Activated CD8-positive, alpha-beta memory T cell treated with anti-CD3 and anti-CD28 coated beads, Interleukin-2, amount 10 ng/mL, durations not matched to agents 7 days and 5 days (primary cell): ENCODE measurements at regions of chr19 and their contacts with region 1.

Region 1: GRCh38 chr19:51514866-51515481 is 13.4 kb upstream of the SIGLEC12 start:
- DNase-seq: peak; percentile 52
- ATAC-seq: peak; percentile 58
- H3K4me3 Mint-ChIP-seq: no peak overlapping the region
- H3K27ac Mint-ChIP-seq: no peak overlapping the region
- H3K4me1 Mint-ChIP-seq: peaks cover 9% of the 10 kb centered on the region
- H3K27me3 Mint-ChIP-seq: peaks cover 45% of the 10 kb centered on the region

Region 2: GRCh38 chr19:51422053-51422448 is 92.9 kb before region 1 on chr19:
- CTCF ChIA-PET with region 1: interaction called, 16 read pairs
- DNase-seq: peak; percentile 90
- ATAC-seq: peak; percentile 83
- H3K4me3 Mint-ChIP-seq: no peak overlapping the region
- H3K27ac Mint-ChIP-seq: no peak overlapping the region
- H3K4me1 Mint-ChIP-seq: peaks cover 17% of the 10 kb centered on the region
- H3K27me3 Mint-ChIP-seq: peaks cover 18% of the 10 kb centered on the region

Region 3: DNA sequence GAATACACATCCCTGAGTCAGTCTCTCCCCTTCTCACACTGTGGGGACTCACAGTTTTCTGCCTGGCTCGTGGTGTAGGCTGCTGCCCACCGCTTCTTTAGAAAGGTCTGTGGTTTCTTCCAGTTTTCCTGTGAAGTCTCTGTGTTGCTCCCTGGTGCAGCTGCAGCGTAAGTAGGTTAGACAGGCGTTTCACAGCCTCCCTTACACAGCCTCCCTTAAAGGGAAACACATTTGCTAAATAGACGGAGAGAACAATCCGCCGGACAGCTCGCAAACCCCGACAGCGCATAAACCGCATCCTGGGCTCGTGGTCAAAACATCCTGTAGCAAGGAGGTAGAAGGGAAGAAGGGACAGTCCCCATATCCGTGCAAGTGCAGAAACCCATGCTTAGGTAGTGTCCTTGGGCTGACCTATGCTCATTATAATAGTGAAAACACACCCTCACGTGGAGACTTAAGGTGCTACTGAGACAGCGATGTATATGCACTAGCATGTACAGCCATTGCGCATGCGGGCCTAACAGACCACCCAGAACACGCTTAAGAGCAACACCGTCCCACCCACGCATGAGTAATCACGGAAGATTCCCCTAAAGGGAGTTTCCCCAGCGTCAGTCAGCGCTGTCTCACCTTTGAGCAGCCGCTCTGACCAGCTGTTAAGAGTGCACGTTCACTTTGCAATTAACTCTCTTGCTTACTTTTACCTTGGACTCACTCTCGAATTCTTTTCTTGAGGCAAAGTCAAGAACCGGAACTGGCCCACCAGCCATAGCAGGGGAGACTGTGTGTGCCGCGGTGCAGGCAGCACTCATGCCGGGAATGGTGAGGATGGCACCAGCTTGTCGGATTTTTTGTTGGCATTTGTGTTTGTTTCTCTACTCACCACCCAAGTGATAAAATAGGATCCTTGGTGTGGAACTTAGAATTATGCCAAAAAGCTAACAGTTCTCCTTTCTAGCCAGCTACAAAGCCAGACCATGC is 73.3 kb before region 1 on chr19:
- CTCF ChIA-PET with region 1: interaction called, 11 read pairs
- DNase-seq: peak; percentile 99
- ATAC-seq: peak; percentile 91
- H3K4me3 Mint-ChIP-seq: peak overlapping the region; percentile 68
- H3K27ac Mint-ChIP-seq: peak overlapping the region; percentile 82
- H3K4me1 Mint-ChIP-seq: peaks cover 39% of the 10 kb centered on the region
- H3K27me3 Mint-ChIP-seq: peaks cover 31% of the 10 kb centered on the region

Region 4: DNA sequence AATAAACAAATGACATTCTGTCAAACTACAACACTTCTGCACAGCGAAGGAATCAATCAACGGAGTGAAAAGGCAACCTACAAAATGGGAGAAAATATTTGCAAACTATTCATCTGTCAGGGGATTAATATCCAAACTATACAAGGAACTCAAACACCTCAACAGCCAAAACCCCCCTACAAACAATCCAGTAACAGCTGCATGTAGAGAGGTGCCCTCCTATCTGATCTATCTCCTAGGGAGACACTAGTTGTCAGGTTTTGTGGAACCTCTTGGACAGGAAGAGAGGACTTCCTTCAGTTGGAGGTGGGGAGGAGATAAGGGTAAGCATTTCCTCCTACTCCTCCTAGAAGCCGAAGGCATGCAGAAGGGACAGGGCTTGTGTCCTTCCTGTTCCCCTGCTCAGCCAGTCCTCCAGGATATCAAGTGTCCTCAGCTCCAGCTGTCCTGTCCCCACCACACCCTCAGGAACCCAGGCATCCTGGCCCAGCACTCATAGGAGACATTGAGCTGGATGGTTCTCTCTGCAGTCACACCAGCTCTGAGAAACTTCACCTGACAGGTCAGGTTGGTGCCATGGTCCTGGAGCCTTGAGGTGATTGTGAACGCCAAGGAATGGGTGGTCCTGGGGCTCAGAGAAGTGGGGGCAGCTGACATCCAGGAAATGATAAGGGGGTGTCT is 47.0 kb before region 1 on chr19:
- CTCF ChIA-PET with region 1: interaction called, 66 read pairs
- DNase-seq: no peak
- ATAC-seq: no peak
- H3K4me3 Mint-ChIP-seq: no peak overlapping the region
- H3K27ac Mint-ChIP-seq: no peak overlapping the region
- H3K4me1 Mint-ChIP-seq: peaks cover 36% of the 10 kb centered on the region
- H3K27me3 Mint-ChIP-seq: peaks cover 47% of the 10 kb centered on the region

Region 5: GRCh38 chr19:51473009-51473707 is 41.8 kb before region 1 on chr19:
- CTCF ChIA-PET with region 1: interaction called, 66 read pairs
- DNase-seq: peak; percentile 87
- ATAC-seq: peak; percentile 79
- H3K4me3 Mint-ChIP-seq: no peak overlapping the region
- H3K27ac Mint-ChIP-seq: no peak overlapping the region
- H3K4me1 Mint-ChIP-seq: peaks cover 12% of the 10 kb centered on the region
- H3K27me3 Mint-ChIP-seq: peaks cover 20% of the 10 kb centered on the region

Region 6: GRCh38 chr19:51525686-51526085 is 10.7 kb after region 1 on chr19:
- CTCF ChIA-PET with region 1: interaction called, 11 read pairs
- DNase-seq: no peak
- ATAC-seq: no peak
- H3K4me3 Mint-ChIP-seq: no peak overlapping the region
- H3K27ac Mint-ChIP-seq: no peak overlapping the region
- H3K4me1 Mint-ChIP-seq: no peaks in the 10 kb centered on the region
- H3K27me3 Mint-ChIP-seq: peaks cover 48% of the 10 kb centered on the region